CD8-positive, alpha-beta T cell (primary cell): ENCODE measurements at regions of chrX and their contacts with region 1.

Region 1: DNA sequence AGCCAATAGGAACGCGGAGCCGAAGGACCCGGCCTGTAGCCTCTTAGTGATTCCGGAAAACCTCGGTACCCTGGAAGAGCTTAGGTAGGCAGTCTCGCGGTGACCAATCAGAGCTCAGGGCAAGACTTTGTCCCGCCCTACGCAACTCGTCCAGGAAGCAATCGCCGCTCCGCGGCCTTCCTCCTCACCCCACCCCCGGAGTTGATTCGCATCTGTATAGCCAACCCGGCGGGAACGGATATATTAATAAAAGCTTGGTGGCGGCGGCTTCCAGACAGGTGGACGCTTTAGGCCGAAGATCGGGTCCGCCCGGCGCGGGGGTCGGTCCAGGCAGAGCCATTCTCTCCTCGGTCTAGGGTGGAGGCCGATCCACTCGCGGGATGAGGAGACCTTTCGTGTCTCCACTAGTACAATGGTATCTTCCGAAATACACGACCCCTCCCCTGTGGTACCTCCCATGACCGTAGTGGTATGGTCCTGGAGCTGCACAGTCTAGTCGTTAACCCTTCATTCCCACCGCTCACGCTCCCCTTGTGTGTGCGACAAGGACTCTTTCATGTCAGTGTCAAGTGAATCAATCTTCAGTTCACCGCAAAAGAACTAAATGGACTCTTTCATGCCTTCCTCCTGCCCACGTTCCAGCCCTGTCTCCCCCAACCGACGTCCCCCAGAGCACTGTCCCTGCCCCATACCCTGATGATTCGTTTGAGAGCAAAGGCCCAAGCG is 24.2 kb upstream of the GLOD5 start:
- DNase-seq: peak; percentile 73 to 97 (median 82)
- ATAC-seq: peak; percentile 95
- H3K4me3 ChIP-seq: peak overlapping the region; percentile 68 to 75
- H3K4me3 Mint-ChIP-seq: peak overlapping the region; percentile 95
- H3K27ac ChIP-seq: peak overlapping the region; percentile 76 to 94
- H3K27ac Mint-ChIP-seq: peak overlapping the region; percentile 98
- H3K4me1 ChIP-seq: peaks cover 16% of the 10 kb centered on the region
- H3K4me1 Mint-ChIP-seq: peaks cover 15% of the 10 kb centered on the region
- H3K27me3 ChIP-seq: no peaks in the 10 kb centered on the region
- H3K27me3 Mint-ChIP-seq: no peaks in the 10 kb centered on the region
- CTCF ChIP-seq: no peak

Region 2: GRCh38 chrX:48597353-48598264 is 139.8 kb before region 1 on chrX and contains the start of gene WDR13:
- CTCF ChIA-PET with region 1: no interaction called
- POLR2A ChIA-PET with region 1: no interaction called
- intact Hi-C with region 1: loop called in 1 of 2 experiments (anchors 2 kb)
- DNase-seq: peak; percentile 79 to 94 (median 90)
- ATAC-seq: peak; percentile 82
- H3K4me3 ChIP-seq: peak within 1 kb of the TSS; percentile 90 to 99
- H3K4me3 Mint-ChIP-seq: peak within 1 kb of the TSS; percentile 94
- H3K27ac ChIP-seq: peak within 1 kb of the TSS; percentile 100
- H3K27ac Mint-ChIP-seq: peak within 1 kb of the TSS; percentile 100
- H3K4me1 ChIP-seq: peaks cover 7% of the 10 kb centered on the region
- H3K4me1 Mint-ChIP-seq: peaks cover 10% of the 10 kb centered on the region
- H3K27me3 ChIP-seq: no peaks in the 10 kb centered on the region
- H3K27me3 Mint-ChIP-seq: no peaks in the 10 kb centered on the region
- CTCF ChIP-seq: no peak
- total RNA-seq, gene WDR13: 41.6 to 51.6 TPM

Region 3: GRCh38 chrX:48683411-48683982 is 53.9 kb before region 1 on chrX and contains the start of gene WAS:
- CTCF ChIA-PET with region 1: no interaction called
- POLR2A ChIA-PET with region 1: interaction called, 17 read pairs
- intact Hi-C with region 1: no loop called
- DNase-seq: peak in 8 of 9 experiments; percentile 24 to 77 (median 48)
- ATAC-seq: peak; percentile 83
- H3K4me3 ChIP-seq: peak within 1 kb of the TSS; percentile 64 to 77
- H3K4me3 Mint-ChIP-seq: peak within 1 kb of the TSS; percentile 90
- H3K27ac ChIP-seq: peak within 1 kb of the TSS; percentile 73 to 87
- H3K27ac Mint-ChIP-seq: peak within 1 kb of the TSS; percentile 93
- H3K4me1 ChIP-seq: peaks cover 35% of the 10 kb centered on the region
- H3K4me1 Mint-ChIP-seq: peaks cover 58% of the 10 kb centered on the region
- H3K27me3 ChIP-seq: no peaks in the 10 kb centered on the region
- H3K27me3 Mint-ChIP-seq: no peaks in the 10 kb centered on the region
- CTCF ChIP-seq: no peak
- total RNA-seq, gene WAS: 50.6 to 54.9 TPM

Region 4: GRCh38 chrX:48714573-48714972 is 22.8 kb before region 1 on chrX:
- CTCF ChIA-PET with region 1: interaction called, 3 read pairs
- POLR2A ChIA-PET with region 1: interaction called, 14 read pairs
- intact Hi-C with region 1: loop called in 1 of 2 experiments (anchors 1 kb)
- DNase-seq: peak in 2 of 9 experiments; percentile 40 to 62
- ATAC-seq: peak; percentile 34
- H3K4me3 ChIP-seq: peak overlapping the region in 1 of 2 experiments; percentile 35
- H3K4me3 Mint-ChIP-seq: peak overlapping the region; percentile 2
- H3K27ac ChIP-seq: peak overlapping the region; percentile 75 to 76
- H3K27ac Mint-ChIP-seq: peak overlapping the region; percentile 92
- H3K4me1 ChIP-seq: peaks cover 78% of the 10 kb centered on the region
- H3K4me1 Mint-ChIP-seq: peaks cover 83% of the 10 kb centered on the region
- H3K27me3 ChIP-seq: no peaks in the 10 kb centered on the region
- H3K27me3 Mint-ChIP-seq: no peaks in the 10 kb centered on the region
- CTCF ChIP-seq: no peak

Region 5: DNA sequence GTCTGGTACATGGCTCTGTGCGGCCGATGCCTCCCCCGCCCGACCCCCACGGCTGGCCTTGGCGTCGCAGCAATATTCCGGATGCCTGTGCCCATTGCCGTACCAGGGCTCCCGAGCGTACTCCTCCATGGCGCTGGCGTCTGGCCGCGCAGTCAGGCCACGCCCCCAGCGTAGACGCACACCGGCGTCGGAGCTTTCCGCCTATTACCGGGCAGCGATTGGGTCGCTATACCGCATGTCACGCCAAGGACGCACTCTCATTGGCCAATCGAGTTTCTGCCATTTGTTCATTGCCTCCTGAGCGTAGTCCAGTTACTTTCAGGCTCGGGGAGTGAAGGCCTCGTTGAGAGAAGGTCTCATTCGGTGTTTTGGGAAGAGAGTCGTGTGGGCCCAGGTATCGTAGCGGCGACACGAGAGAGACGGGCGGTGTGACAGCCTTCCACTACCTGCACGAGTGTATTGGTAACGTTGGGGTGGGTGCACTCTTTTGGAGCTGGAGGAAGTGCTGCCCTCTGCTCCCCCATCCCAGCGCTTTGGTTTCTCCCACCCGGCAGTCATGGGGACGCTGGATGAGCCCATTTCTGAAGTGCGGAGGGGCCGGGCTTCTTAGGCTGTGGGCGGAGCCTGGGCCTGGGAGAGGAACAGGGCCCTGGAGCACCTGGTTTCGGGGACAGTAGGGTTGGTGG is 160.4 kb after region 1 on chrX and contains the starts of genes PQBP1 and TIMM17B:
- CTCF ChIA-PET with region 1: no interaction called
- POLR2A ChIA-PET with region 1: interaction called, 3 read pairs
- intact Hi-C with region 1: loop called in 1 of 2 experiments (anchors 5 kb)
- DNase-seq: peak; percentile 72 to 96 (median 84)
- ATAC-seq: peak; percentile 86
- H3K4me3 ChIP-seq: peak within 1 kb of the TSS; percentile 87 to 98
- H3K4me3 Mint-ChIP-seq: peak within 1 kb of the TSS; percentile 88
- H3K27ac ChIP-seq: peak within 1 kb of the TSS; percentile 98
- H3K27ac Mint-ChIP-seq: peak within 1 kb of the TSS; percentile 95
- H3K4me1 ChIP-seq: peaks cover 21% of the 10 kb centered on the region
- H3K4me1 Mint-ChIP-seq: peaks cover 29% of the 10 kb centered on the region
- H3K27me3 ChIP-seq: no peaks in the 10 kb centered on the region
- H3K27me3 Mint-ChIP-seq: no peaks in the 10 kb centered on the region
- CTCF ChIP-seq: no peak
- total RNA-seq, gene PQBP1: 79.9 to 82.1 TPM
- total RNA-seq, gene TIMM17B: 35.0 to 37.6 TPM

Region 6: GRCh38 chrX:48957827-48958634 is 220.7 kb after region 1 on chrX:
- CTCF ChIA-PET with region 1: no interaction called
- POLR2A ChIA-PET with region 1: interaction called, 4 read pairs
- intact Hi-C with region 1: loop called in 1 of 2 experiments (anchors 1 kb)
- DNase-seq: peak; percentile 83 to 98 (median 91)
- ATAC-seq: peak; percentile 76
- H3K4me3 ChIP-seq: peak overlapping the region; percentile 75 to 94
- H3K4me3 Mint-ChIP-seq: peak overlapping the region; percentile 99
- H3K27ac ChIP-seq: peak overlapping the region; percentile 100
- H3K27ac Mint-ChIP-seq: peak overlapping the region; percentile 100
- H3K4me1 ChIP-seq: peaks cover 44% of the 10 kb centered on the region
- H3K4me1 Mint-ChIP-seq: peaks cover 39% of the 10 kb centered on the region
- H3K27me3 ChIP-seq: no peaks in the 10 kb centered on the region
- H3K27me3 Mint-ChIP-seq: no peaks in the 10 kb centered on the region
- CTCF ChIP-seq: no peak